PC-3 (cell line): ENCODE measurements at regions of chr1 and their contacts with region 1.

Region 1: DNA sequence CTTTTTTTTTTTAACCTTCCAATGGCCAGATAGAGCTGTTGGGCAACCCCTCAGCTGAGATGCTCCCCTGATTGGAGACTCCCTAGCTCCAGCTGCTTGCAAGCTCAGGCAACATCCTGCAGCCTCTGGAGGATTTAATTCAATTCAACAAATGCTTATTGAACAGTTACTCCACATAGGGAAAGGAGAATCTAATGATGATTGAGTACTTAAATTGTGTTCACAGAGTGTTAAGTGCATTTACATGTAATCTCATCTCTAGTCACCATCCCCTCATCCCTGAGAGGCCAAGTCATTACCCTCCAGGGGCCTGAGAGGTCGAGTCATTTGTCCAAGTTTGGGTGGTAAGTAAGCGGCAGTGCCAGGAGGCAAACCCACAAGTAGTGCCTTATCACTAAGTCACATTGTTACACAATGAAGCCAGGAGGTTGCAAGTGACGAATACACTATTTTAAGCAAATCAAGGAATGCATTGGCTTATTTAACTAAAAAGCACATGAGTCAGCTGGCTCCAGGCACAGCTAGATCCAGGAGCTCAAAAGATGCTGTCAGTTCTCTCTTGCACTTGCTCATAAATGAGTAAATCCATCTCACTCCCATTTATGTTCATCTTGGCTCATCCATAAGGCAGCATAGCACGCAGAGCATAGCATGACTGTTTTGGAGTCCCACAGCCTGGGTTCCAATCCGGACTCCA is 64.3 kb downstream of the OPTC start:
- DNase-seq: peak; percentile 99
- ATAC-seq: peak; percentile 77
- H3K4me3 ChIP-seq: peak overlapping the region; percentile 27; the same call in 1 of the 2 replicates
- H3K27ac ChIP-seq: peak overlapping the region; percentile 97
- H3K4me1 ChIP-seq: peaks cover 49% of the 10 kb centered on the region
- H3K27me3 ChIP-seq: no peaks in the 10 kb centered on the region
- CTCF ChIP-seq: no peak

Region 2: GRCh38 chr1:203524152-203524551 is 34.1 kb before region 1 on chr1:
- CTCF ChIA-PET with region 1: no interaction called
- POLR2A ChIA-PET with region 1: no interaction called
- intact Hi-C with region 1: no loop called
- DNase-seq: no peak
- ATAC-seq: no peak
- H3K4me3 ChIP-seq: no peak overlapping the region
- H3K27ac ChIP-seq: no peak overlapping the region
- H3K4me1 ChIP-seq: peaks cover 34% of the 10 kb centered on the region
- H3K27me3 ChIP-seq: no peaks in the 10 kb centered on the region
- CTCF ChIP-seq: no peak

Region 3: GRCh38 chr1:203600782-203601736 is 42.8 kb after region 1 on chr1:
- CTCF ChIA-PET with region 1: no interaction called
- POLR2A ChIA-PET with region 1: no interaction called
- intact Hi-C with region 1: loop called (anchors 1 kb)
- DNase-seq: no peak
- ATAC-seq: no peak
- H3K4me3 ChIP-seq: no peak overlapping the region
- H3K27ac ChIP-seq: no peak overlapping the region
- H3K4me1 ChIP-seq: peaks cover 9% of the 10 kb centered on the region
- H3K27me3 ChIP-seq: no peaks in the 10 kb centered on the region
- CTCF ChIP-seq: no peak